GM10248 (cell line): ENCODE measurements at regions of chr14 and their contacts with region 1.

Region 1: GRCh38 chr14:21978184-21978998 is 304.8 kb upstream of the OR4E1 start:
- DNase-seq: peak; percentile 64
- CTCF ChIP-seq: peak; percentile 77

Region 2: GRCh38 chr14:21711360-21711961 is 266.9 kb before region 1 on chr14:
- CTCF ChIA-PET with region 1: no interaction called
- POLR2A ChIA-PET with region 1: no interaction called
- DNase-seq: peak; percentile 52
- CTCF ChIP-seq: peak; percentile 73

Region 3: GRCh38 chr14:21917699-21918436 is 60.5 kb before region 1 on chr14:
- CTCF ChIA-PET with region 1: interaction called, 11 read pairs
- POLR2A ChIA-PET with region 1: no interaction called
- DNase-seq: peak; percentile 17
- CTCF ChIP-seq: peak; percentile 90

Region 4: GRCh38 chr14:21940887-21941856 is 37.2 kb before region 1 on chr14:
- CTCF ChIA-PET with region 1: interaction called, 18 read pairs
- POLR2A ChIA-PET with region 1: no interaction called
- DNase-seq: no peak
- CTCF ChIP-seq: peak; percentile 28

Region 5: GRCh38 chr14:21965042-21965441 is 13.3 kb before region 1 on chr14:
- CTCF ChIA-PET with region 1: interaction called, 25 read pairs
- POLR2A ChIA-PET with region 1: no interaction called
- DNase-seq: no peak
- CTCF ChIP-seq: no peak

Region 6: DNA sequence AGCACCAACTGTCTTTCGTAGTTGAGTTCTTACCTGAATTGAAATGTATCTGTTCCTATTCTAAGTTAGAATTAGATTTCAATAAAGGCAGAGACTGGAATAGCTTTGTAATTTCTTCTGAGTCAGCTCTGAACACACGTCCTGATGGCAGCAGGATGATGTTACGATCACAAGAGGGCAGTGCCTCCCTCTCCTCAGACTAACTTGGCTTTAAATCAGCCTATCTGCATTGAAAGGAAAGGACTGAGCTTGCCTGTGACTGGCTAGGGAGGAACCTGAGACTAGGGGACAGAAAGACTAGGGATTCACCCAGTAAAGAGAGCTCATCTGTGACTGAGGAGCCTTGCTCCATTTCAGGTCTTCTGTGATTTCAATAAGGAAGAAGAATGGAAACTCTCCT is 18.9 kb after region 1 on chr14:
- CTCF ChIA-PET with region 1: interaction called, 33 read pairs
- POLR2A ChIA-PET with region 1: interaction called, 3 read pairs
- DNase-seq: no peak
- CTCF ChIP-seq: peak; percentile 28

Region 7: DNA sequence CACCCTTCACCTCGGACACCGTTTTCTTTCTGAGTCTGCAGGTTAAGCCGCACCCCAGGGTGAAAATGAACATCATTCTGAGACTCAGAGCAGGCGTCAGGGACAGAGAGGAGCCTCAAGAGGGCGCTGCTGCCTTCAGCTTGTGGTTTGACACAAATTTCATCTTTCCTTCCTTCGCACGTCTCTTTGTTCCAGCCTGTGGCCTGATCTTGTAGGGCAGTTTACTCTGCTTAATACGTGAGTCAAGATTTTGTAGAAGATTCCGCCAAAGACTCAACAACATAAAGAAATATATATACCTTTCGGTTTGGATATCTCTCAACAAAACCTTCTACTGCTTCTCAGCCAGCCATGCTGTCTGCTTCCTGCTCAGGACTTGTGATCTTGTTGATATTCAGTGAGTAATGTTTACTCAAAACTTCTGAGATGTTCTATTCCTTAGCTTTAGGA is 24.5 kb after region 1 on chr14:
- CTCF ChIA-PET with region 1: interaction called, 33 read pairs
- POLR2A ChIA-PET with region 1: interaction called, 3 read pairs
- DNase-seq: no peak
- CTCF ChIP-seq: no peak

Region 8: GRCh38 chr14:22010545-22011252 is 32.3 kb after region 1 on chr14:
- CTCF ChIA-PET with region 1: interaction called, 20 read pairs
- POLR2A ChIA-PET with region 1: no interaction called
- DNase-seq: no peak
- CTCF ChIP-seq: no peak